ENCODE measurements at regions of chr1 and their contacts with region 1.

Region 1: GRCh38 chr1:12516741-12517140 is 101.3 kb downstream of the DHRS3 start:
- DNase-seq: no peak
- H3K4me3 ChIP-seq: no peak overlapping the region
- H3K27ac ChIP-seq: no peak overlapping the region
- H3K4me1 ChIP-seq: no peaks in the 10 kb centered on the region
- H3K27me3 ChIP-seq: no peaks in the 10 kb centered on the region
- CTCF ChIP-seq: no peak
- POLR2A ChIP-seq: no peak

Region 2: DNA sequence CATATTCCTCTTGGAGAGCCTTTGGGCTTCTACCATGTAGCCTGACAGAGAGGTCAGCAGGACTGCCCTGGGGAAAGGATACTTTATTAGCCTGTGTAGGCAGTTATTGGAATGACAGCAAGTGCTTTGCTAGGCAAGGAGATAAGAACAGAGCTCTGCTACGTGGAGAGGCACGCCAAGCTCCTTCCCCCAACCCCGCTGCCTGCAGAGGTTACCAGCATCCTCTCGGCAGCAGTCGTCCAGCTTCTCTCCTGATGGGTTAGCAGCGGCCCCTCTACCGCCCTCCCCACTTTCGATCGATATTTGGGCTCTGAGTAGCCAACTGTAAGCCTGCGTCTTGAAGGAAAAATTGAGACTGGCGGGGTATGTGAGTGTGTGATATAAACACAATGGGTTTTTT is 21.0 kb before region 1 on chr1:
- intact Hi-C with region 1: loop called (anchors 1 kb)
- DNase-seq: no peak
- H3K4me3 ChIP-seq: no peak overlapping the region
- H3K27ac ChIP-seq: no peak overlapping the region
- H3K4me1 ChIP-seq: no peaks in the 10 kb centered on the region
- H3K27me3 ChIP-seq: no peaks in the 10 kb centered on the region
- CTCF ChIP-seq: no peak
- POLR2A ChIP-seq: no peak